Activated B cell treated with CpG ODN at 0.5 μM for 24 hours (primary cell): ENCODE measurements at regions of chr9 and their contacts with region 1.

Region 1: GRCh38 chr9:137034863-137035761 is 3.2 kb upstream of the FUT7 start:
- DNase-seq: peak; percentile 82
- ATAC-seq: peak; percentile 65
- H3K4me3 Mint-ChIP-seq: peak overlapping the region; percentile 67
- H3K27ac Mint-ChIP-seq: peak overlapping the region; percentile 75
- H3K4me1 Mint-ChIP-seq: peaks cover 47% of the 10 kb centered on the region
- H3K27me3 Mint-ChIP-seq: no peaks in the 10 kb centered on the region
- CTCF ChIP-seq: no peak

Region 2: GRCh38 chr9:136949817-136950655 is 85.1 kb before region 1 on chr9:
- CTCF ChIA-PET with region 1: interaction called, 39 read pairs
- POLR2A ChIA-PET with region 1: interaction called, 8 read pairs
- intact Hi-C with region 1: loop called (anchors 1 kb)
- DNase-seq: peak; percentile 94
- ATAC-seq: peak; percentile 96
- H3K4me3 Mint-ChIP-seq: peak overlapping the region; percentile 82
- H3K27ac Mint-ChIP-seq: peak overlapping the region; percentile 86
- H3K4me1 Mint-ChIP-seq: peaks cover 5% of the 10 kb centered on the region
- H3K27me3 Mint-ChIP-seq: no peaks in the 10 kb centered on the region
- CTCF ChIP-seq: no peak

Region 3: GRCh38 chr9:137000177-137000883 is 34.8 kb before region 1 on chr9:
- CTCF ChIA-PET with region 1: interaction called, 11 read pairs
- POLR2A ChIA-PET with region 1: interaction called, 12 read pairs
- intact Hi-C with region 1: loop called (anchors 1 kb)
- DNase-seq: no peak
- ATAC-seq: peak; percentile 69
- H3K4me3 Mint-ChIP-seq: peak overlapping the region; percentile 75
- H3K27ac Mint-ChIP-seq: peak overlapping the region; percentile 83
- H3K4me1 Mint-ChIP-seq: peaks cover 55% of the 10 kb centered on the region
- H3K27me3 Mint-ChIP-seq: no peaks in the 10 kb centered on the region
- CTCF ChIP-seq: no peak

Region 4: DNA sequence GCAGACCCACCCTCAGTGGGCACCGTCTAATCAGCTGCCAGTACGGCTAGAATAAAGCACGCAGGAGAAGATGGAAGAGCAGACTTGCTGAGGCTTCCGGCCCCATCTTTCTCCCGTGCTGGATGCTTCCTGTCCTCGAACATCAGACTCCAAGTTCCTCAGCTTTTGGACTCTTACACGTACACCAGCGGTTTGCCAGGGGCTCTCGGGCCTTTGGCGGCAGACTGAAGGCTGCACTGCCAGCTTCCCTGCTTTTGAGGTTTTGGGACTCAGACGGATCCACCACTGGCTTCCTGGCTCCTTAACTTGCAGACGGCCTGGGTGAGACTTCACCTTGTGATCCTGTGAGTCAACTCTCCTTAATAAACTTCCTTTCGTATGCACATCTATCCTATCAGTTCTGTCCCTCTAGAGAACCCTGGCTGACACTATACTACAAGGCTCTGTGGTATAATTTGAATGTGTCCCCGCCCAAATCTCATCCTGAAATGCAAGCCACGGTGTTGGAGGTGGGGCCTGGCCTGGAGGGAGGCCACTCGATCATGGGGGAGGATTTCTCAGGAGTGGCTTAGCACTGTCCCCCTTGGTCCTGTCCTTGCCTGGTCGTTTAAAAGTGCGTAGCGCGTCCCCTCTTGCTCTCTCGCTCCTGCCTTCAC is 298.0 kb after region 1 on chr9:
- CTCF ChIA-PET with region 1: no interaction called
- POLR2A ChIA-PET with region 1: no interaction called
- intact Hi-C with region 1: no loop called
- DNase-seq: no peak
- ATAC-seq: no peak
- H3K4me3 Mint-ChIP-seq: no peak overlapping the region
- H3K27ac Mint-ChIP-seq: no peak overlapping the region
- H3K4me1 Mint-ChIP-seq: peaks cover 6% of the 10 kb centered on the region
- H3K27me3 Mint-ChIP-seq: peaks cover 5% of the 10 kb centered on the region
- CTCF ChIP-seq: no peak